Aorta (tissue), 5 donors: ENCODE measurements at regions of chr4 and their contacts with region 1.

Region 1: GRCh38 chr4:48602222-48602621 is 112.2 kb downstream of the ZAR1 start:
- DNase-seq: no peak
- ATAC-seq: no peak
- H3K4me3 ChIP-seq: no peak overlapping the region
- H3K27ac ChIP-seq: no peak overlapping the region
- H3K4me1 ChIP-seq: no peaks in the 10 kb centered on the region
- H3K27me3 ChIP-seq: no peaks in the 10 kb centered on the region

Region 2: DNA sequence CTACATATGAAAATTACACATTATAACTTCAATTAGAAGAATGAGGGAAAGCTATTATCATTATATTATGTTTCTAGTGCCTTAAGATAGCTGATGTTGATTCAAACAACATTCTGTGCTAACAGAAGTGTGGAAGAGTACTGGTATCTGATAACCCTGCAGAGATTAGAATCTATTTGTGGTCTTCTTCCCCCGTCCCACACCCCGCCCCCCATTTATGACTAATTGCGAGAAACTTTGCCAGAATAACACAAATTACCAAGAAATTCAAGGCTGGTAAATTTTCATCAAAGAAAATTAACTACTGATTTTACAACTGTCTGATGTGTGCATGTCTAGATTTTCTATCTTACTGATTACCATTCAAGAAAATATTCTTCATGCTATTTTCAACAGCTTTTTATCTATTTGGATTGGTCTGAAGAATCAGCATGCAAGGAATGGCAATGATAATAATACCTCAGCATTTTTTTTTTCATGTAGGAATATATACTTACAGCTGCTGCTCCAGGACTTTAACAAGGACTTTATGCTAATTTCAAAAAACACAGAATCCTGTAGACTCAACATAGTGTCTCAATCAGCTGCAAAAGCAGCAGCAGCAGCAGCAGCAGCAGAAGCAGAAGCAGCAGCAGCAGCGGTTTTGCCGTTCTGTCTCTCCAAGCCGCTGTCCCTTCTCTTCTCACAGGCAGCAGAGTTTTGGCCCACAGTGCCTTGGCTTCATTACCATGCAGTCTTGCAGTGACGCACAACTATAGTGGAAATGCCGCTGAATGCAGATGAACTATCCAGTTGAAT is 51.2 kb after region 1 on chr4:
- intact Hi-C with region 1: no loop called
- DNase-seq: peak in 1 of 2 donors; percentile 71
- ATAC-seq: peak; percentile 82
- H3K4me3 ChIP-seq: peak overlapping the region in 1 of 2 donors; percentile 64
- H3K27ac ChIP-seq: peak overlapping the region in 1 of 2 donors; percentile 14
- H3K4me1 ChIP-seq: peaks cover 2 to 12% of the 10 kb centered on the region in 2 donors
- H3K27me3 ChIP-seq: no peaks in the 10 kb centered on the region

Region 3: DNA sequence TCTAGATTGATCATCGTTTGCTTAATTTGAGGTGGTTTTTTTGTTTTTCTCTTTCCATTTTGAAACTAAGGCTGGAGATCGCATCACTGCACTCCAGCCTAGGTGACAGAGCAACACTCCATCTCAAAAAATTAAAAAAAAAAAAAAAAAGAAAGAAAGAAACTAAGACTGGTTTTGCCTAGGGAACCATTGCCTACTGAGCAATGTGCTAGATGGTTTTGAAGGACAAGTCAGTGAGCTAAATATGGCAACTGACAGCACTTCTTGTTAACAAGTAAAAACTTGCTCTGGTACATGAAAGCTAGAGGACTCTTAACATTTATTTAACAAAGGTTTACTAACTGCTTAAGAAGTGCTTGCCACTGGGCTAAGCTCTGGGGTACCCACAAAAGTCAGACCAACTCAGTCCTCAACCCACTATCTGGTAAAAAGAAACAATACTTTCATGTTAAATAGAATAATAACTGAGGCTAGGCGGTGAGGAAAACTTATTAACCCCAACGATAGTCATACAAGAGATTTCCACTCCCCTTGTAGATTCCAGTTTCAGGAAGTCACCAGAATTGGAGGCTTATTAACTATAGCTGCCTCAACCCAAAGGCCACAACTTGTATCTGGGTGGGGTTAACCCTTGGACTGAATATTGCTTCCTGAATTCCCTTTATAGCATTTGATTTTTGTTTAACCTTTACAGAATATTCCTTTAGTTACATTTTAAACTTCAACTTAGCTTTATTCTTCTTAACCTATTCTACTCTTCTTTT is 66.2 kb after region 1 on chr4:
- intact Hi-C with region 1: loop called in 1 of 2 experiments (anchors 10 kb)
- DNase-seq: no peak
- ATAC-seq: no peak
- H3K4me3 ChIP-seq: no peak overlapping the region
- H3K27ac ChIP-seq: no peak overlapping the region
- H3K4me1 ChIP-seq: peaks cover 2 to 12% of the 10 kb centered on the region in 2 donors
- H3K27me3 ChIP-seq: no peaks in the 10 kb centered on the region

Region 4: DNA sequence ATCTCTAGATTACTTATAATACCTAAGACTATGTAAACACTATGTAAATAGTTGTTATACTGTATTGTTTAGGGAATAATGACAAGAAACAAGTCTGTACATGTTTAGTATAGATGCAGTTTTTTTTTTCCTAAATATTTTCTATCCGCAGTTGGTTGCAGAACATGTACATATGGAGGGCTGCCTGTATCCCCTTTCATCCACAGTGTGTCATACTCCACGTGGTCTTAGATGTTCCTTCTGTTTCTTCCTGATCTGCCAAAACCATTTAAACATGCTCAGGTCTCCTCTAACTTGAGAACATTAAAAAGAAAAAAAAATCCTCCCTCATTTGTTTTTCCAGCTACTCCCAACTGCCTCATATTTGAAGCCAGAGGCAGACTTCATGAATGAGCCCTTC is 242.6 kb after region 1 on chr4:
- intact Hi-C with region 1: loop called in 1 of 2 experiments (anchors 10 kb)
- DNase-seq: no peak
- ATAC-seq: no peak
- H3K4me3 ChIP-seq: no peak overlapping the region
- H3K27ac ChIP-seq: no peak overlapping the region
- H3K4me1 ChIP-seq: no peaks in the 10 kb centered on the region
- H3K27me3 ChIP-seq: no peaks in the 10 kb centered on the region